Adrenal gland (tissue), 19 donors: ENCODE measurements at regions of chr19 and their contacts with region 1.

Region 1: DNA sequence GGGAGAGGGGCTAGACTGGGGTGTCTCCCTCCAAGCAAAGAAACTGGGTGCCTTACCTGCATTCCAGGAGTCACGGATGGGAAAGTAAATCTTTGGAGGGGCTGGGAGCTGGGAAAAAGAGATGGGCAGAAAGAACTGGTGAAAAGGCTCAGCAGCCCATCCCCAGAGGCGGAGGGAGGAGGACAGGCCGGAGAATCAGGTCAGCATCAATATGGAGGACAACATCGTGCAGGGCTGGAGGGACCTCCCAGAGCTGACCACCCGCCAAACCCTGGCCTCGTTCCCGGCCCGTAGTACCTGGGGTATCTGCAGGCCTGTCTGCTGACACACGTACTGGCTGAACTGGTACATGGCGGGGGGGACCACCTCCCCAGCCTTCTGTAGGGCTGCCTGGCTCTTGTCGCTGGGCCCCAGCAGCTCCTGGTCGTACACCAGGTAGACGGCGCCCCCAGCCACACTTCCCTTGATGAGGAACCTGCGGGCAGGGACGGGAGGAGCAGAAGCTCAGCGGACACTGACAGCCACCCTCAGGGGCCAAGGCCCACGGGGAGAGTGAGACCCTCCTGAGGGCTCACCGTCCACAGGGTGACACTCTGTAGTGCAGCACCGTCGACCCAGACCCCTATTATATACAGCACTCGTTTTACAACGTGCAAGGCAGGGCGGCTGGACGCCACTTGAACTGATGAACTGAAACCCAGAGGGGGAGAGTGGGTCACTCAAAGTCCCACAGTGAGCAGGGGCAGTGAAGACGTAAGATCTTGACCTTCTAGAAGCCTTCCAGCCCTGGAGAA is 830 bp downstream of the MICOS13 start:
- DNase-seq: peak in 3 of 7 donors; percentile 42 to 51 (median 50)
- H3K4me3 ChIP-seq: peak overlapping the region; percentile 73 to 99 (median 92)
- H3K27ac ChIP-seq: peak overlapping the region in 3 of 5 donors; percentile 77 to 90 (median 89)
- H3K4me1 ChIP-seq: peaks cover 13% of the 10 kb centered on the region in 2 donors
- H3K27me3 ChIP-seq: no peaks in the 10 kb centered on the region
- CTCF ChIP-seq: no peak
- POLR2A ChIP-seq: no peak

Region 2: GRCh38 chr19:5086725-5087439 is 592.6 kb before region 1 on chr19:
- intact Hi-C with region 1: loop called in 1 of 2 experiments (anchors 5 kb)
- DNase-seq: no peak
- H3K4me3 ChIP-seq: no peak overlapping the region
- H3K27ac ChIP-seq: peak overlapping the region in 1 of 5 donors; percentile 60
- H3K4me1 ChIP-seq: peaks cover 10 to 28% of the 10 kb centered on the region in 2 donors
- H3K27me3 ChIP-seq: no peaks in the 10 kb centered on the region
- CTCF ChIP-seq: peak in 1 of 6 experiments; percentile 15
- POLR2A ChIP-seq: no peak

Region 3: GRCh38 chr19:5627395-5627904 is 52.0 kb before region 1 on chr19:
- intact Hi-C with region 1: loop called in 1 of 2 experiments (anchors 5 kb)
- DNase-seq: peak; percentile 46 to 83 (median 71)
- H3K4me3 ChIP-seq: no peak overlapping the region
- H3K27ac ChIP-seq: peak overlapping the region in 4 of 5 donors; percentile 45 to 95 (median 58)
- H3K4me1 ChIP-seq: peaks cover 43 to 80% of the 10 kb centered on the region in 2 donors
- H3K27me3 ChIP-seq: no peaks in the 10 kb centered on the region
- CTCF ChIP-seq: no peak
- POLR2A ChIP-seq: no peak